Left ventricle myocardium inferior (tissue), 1 donor: ENCODE measurements at regions of chr4 and their contacts with region 1.

Region 1: GRCh38 chr4:7192252-7193029 is at the start of gene SORCS2:
- DNase-seq: peak; percentile 64
- H3K4me3 ChIP-seq: peak within 1 kb of the TSS; percentile 67
- H3K27ac ChIP-seq: no peak within 1 kb of the TSS
- H3K4me1 ChIP-seq: peaks cover 20% of the 10 kb centered on the region
- H3K27me3 ChIP-seq: peaks cover 80% of the 10 kb centered on the region
- CTCF ChIP-seq: peak; percentile 86
- total RNA-seq, gene SORCS2: 1.2 TPM

Region 2: GRCh38 chr4:7295911-7296660 is 103.6 kb after region 1 on chr4:
- intact Hi-C with region 1: loop called (anchors 5 kb)
- DNase-seq: peak; percentile 31
- H3K4me3 ChIP-seq: peak overlapping the region; percentile 36
- H3K27ac ChIP-seq: peak overlapping the region; percentile 11
- H3K4me1 ChIP-seq: peaks cover 19% of the 10 kb centered on the region
- H3K27me3 ChIP-seq: peaks cover 14% of the 10 kb centered on the region
- CTCF ChIP-seq: peak; percentile 71

Region 3: GRCh38 chr4:7719354-7720174 is 527.1 kb after region 1 on chr4:
- intact Hi-C with region 1: loop called (anchors 10 kb)
- DNase-seq: peak; percentile 50
- H3K4me3 ChIP-seq: peak overlapping the region; percentile 23
- H3K27ac ChIP-seq: no peak overlapping the region
- H3K4me1 ChIP-seq: peaks cover 8% of the 10 kb centered on the region
- H3K27me3 ChIP-seq: peaks cover 22% of the 10 kb centered on the region
- CTCF ChIP-seq: peak; percentile 89